ENCODE measurements at regions of chr6 and their contacts with region 1.

Region 1: DNA sequence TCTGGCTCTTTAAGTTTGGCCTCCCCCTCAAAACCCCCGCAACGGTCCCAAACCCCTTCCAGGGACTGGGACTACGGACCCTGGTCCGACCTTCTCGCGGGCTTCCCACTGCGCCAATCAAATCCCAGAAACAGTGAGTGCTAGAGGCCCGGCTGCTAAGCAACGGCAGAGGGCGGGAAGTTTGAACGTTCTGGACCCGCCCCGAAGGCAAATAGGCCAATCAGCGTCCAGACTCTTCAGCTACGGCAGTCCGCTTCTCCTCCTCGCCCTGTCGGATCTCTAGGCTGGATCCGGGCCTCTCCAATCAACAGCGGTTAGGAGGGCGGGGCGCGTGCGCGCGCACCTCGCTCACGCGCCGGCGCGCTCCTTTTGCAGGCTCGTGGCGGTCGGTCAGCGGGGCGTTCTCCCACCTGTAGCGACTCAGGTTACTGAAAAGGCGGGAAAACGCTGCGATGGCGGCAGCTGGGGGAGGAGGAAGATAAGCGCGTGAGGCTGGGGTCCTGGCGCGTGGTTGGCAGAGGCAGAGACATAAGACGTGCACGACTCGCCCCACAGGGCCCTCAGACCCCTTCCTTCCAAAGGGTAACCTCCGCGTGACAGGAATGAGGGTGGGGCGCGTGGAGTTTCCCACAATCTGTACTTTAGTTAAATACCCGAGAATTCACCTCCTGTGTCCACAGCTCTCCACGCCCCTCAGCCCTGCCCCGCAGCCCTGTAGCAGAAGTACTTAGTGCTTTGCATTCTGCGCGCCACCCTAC is at the start of gene MSH5:
- DNase-seq: peak; percentile 96
- ATAC-seq: peak; percentile 82
- H3K4me3 ChIP-seq: peak within 1 kb of the TSS; percentile 71 to 90 (median 81)
- H3K4me3 Mint-ChIP-seq: peak within 1 kb of the TSS; percentile 100
- H3K27ac ChIP-seq: peak within 1 kb of the TSS; percentile 81 to 96
- H3K27ac Mint-ChIP-seq: peak within 1 kb of the TSS; percentile 91
- H3K4me1 ChIP-seq: peaks cover 39 to 42% of the 10 kb centered on the region in 2 donors
- H3K4me1 Mint-ChIP-seq: peaks cover 60% of the 10 kb centered on the region
- H3K27me3 ChIP-seq: no peaks in the 10 kb centered on the region
- H3K27me3 Mint-ChIP-seq: no peaks in the 10 kb centered on the region
- CTCF ChIP-seq: no peak
- total RNA-seq, gene MSH5: 49.9 and 50.1 TPM in 2 replicates

Region 2: GRCh38 chr6:31652925-31653718 is 86.7 kb before region 1 on chr6:
- CTCF ChIA-PET with region 1: no interaction called
- POLR2A ChIA-PET with region 1: interaction called, 8 read pairs
- intact Hi-C with region 1: loop called (anchors 1 kb)
- DNase-seq: no peak
- ATAC-seq: peak; percentile 69
- H3K4me3 ChIP-seq: peak overlapping the region; percentile 66 to 96 (median 86)
- H3K4me3 Mint-ChIP-seq: peak overlapping the region; percentile 98
- H3K27ac ChIP-seq: peak overlapping the region; percentile 97 to 98
- H3K27ac Mint-ChIP-seq: peak overlapping the region; percentile 100
- H3K4me1 ChIP-seq: peaks cover 22 to 29% of the 10 kb centered on the region in 2 donors
- H3K4me1 Mint-ChIP-seq: peaks cover 48% of the 10 kb centered on the region
- H3K27me3 ChIP-seq: no peaks in the 10 kb centered on the region
- H3K27me3 Mint-ChIP-seq: no peaks in the 10 kb centered on the region
- CTCF ChIP-seq: no peak

Region 3: DNA sequence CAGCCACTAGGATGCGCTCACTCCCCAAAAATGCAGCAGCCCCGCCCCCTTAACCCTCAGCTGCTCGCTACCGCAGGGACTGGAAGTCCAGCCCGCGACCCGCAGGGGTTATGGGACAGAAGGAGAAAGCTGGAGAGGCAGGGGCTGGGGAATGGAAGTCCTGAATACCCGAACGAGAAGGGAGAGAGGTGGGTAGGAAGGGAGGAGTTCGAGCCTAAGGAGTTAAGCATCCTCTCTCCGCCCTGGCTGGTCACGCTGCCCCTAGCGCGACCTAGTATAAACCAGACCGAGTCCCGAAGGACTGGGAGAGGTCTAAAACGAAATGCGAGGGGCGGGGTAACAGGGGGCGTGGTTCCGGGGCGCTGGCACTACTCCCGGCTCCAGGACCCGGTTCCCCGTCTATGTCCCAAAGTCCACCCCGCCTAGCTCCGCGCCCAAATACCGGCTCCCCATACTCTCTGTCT is 10.3 kb before region 1 on chr6:
- CTCF ChIA-PET with region 1: interaction called, 90 read pairs
- POLR2A ChIA-PET with region 1: interaction called, 20 read pairs
- intact Hi-C with region 1: loop called (anchors 1 kb)
- DNase-seq: peak; percentile 90
- ATAC-seq: peak; percentile 48
- H3K4me3 ChIP-seq: peak overlapping the region; percentile 67 to 94 (median 85)
- H3K4me3 Mint-ChIP-seq: peak overlapping the region; percentile 99
- H3K27ac ChIP-seq: peak overlapping the region; percentile 78 to 82
- H3K27ac Mint-ChIP-seq: peak overlapping the region; percentile 97
- H3K4me1 ChIP-seq: peaks cover 49 to 58% of the 10 kb centered on the region in 2 donors
- H3K4me1 Mint-ChIP-seq: peaks cover 72% of the 10 kb centered on the region
- H3K27me3 ChIP-seq: no peaks in the 10 kb centered on the region
- H3K27me3 Mint-ChIP-seq: no peaks in the 10 kb centered on the region
- CTCF ChIP-seq: peak; percentile 89

Region 4: DNA sequence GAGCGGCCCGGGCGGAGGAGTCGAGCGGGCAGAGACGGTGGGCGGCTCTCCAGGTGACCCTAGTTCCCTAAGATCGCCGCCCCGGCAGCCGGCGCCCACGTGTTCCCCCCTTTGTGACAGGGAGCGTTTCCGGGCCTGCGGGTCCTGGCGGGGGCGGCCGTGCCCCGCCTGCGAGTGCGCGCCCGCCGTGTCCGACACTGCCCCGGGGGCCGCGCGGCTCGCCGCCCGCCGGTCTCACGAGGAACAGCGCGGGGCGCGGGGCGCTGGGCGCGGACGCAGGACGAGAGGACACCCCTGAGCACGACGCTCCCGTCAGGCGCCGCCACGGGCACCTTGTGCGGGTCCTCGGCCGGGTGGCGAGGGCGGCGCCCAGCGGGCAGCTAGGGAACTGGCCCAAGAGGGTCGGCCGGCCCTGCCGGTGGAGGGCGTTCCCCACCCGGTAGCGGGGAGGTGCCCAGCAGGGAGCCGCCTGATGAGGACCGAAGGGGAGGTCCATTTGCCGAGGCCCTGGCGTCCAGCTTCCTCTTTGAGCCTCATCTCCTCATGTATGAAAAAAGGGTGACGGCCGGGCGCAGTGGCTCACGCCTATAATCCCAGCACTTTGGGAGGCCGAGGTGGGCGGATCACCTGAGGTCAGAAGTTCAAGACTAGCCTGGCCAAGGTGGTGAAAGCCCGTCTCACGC is 55.9 kb after region 1 on chr6 and contains the start of gene VARS1:
- CTCF ChIA-PET with region 1: interaction called, 34 read pairs
- POLR2A ChIA-PET with region 1: interaction called, 9 read pairs
- intact Hi-C with region 1: loop called (anchors 2 kb)
- DNase-seq: peak; percentile 96
- ATAC-seq: peak; percentile 91
- H3K4me3 ChIP-seq: peak within 1 kb of the TSS; percentile 72 to 96 (median 95)
- H3K4me3 Mint-ChIP-seq: peak within 1 kb of the TSS; percentile 97
- H3K27ac ChIP-seq: peak within 1 kb of the TSS; percentile 75 to 87
- H3K27ac Mint-ChIP-seq: peak within 1 kb of the TSS; percentile 99
- H3K4me1 ChIP-seq: peaks cover 45 to 59% of the 10 kb centered on the region in 2 donors
- H3K4me1 Mint-ChIP-seq: peaks cover 54% of the 10 kb centered on the region
- H3K27me3 ChIP-seq: no peaks in the 10 kb centered on the region
- H3K27me3 Mint-ChIP-seq: no peaks in the 10 kb centered on the region
- CTCF ChIP-seq: peak; percentile 79
- total RNA-seq, gene VARS1: 47.4 and 52.3 TPM in 2 replicates

Region 5: GRCh38 chr6:31901953-31902643 is 162.3 kb after region 1 on chr6 and contains the start of gene ZBTB12:
- CTCF ChIA-PET with region 1: no interaction called
- POLR2A ChIA-PET with region 1: no interaction called
- intact Hi-C with region 1: loop called (anchors 5 kb)
- DNase-seq: peak; percentile 93
- ATAC-seq: peak; percentile 64
- H3K4me3 ChIP-seq: peak within 1 kb of the TSS; percentile 27 to 82 (median 77)
- H3K4me3 Mint-ChIP-seq: peak within 1 kb of the TSS; percentile 94
- H3K27ac ChIP-seq: peak within 1 kb of the TSS; percentile 76 to 79
- H3K27ac Mint-ChIP-seq: peak within 1 kb of the TSS; percentile 93
- H3K4me1 ChIP-seq: peaks cover 13 to 23% of the 10 kb centered on the region in 2 donors
- H3K4me1 Mint-ChIP-seq: peaks cover 32% of the 10 kb centered on the region
- H3K27me3 ChIP-seq: no peaks in the 10 kb centered on the region
- H3K27me3 Mint-ChIP-seq: no peaks in the 10 kb centered on the region
- CTCF ChIP-seq: no peak
- total RNA-seq, gene ZBTB12: 8.1 and 8.9 TPM in 2 replicates